ENCODE measurements at regions of chr3 and their contacts with region 1.

Region 1: DNA sequence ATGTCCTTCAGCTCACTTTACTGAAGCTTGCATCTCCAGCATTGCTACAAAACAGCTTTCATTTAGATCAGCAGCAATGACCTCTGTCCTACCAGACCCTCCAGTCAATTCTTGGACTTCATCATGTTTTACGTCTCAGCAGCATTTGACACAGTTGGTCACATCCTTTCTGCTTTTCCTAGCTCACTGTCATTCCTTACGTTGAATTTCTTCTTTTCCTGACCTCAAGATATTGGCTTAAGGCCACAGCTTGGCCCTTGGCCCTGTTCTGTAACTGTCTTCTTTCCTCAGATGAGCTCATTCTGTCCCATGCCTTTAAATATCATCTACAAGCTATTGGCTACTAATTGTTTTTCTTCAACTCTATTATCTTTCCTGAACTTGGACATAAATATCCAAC is 576.2 kb upstream of the KCNMB2 start:
- DNase-seq: no peak
- H3K4me3 ChIP-seq: no peak overlapping the region
- H3K4me3 Mint-ChIP-seq: no peak overlapping the region
- H3K27ac Mint-ChIP-seq: no peak overlapping the region
- H3K4me1 ChIP-seq: no peaks in the 10 kb centered on the region
- H3K4me1 Mint-ChIP-seq: peaks cover 7% of the 10 kb centered on the region
- H3K27me3 ChIP-seq: no peaks in the 10 kb centered on the region
- H3K27me3 Mint-ChIP-seq: no peaks in the 10 kb centered on the region
- CTCF ChIP-seq: no peak

Region 2: DNA sequence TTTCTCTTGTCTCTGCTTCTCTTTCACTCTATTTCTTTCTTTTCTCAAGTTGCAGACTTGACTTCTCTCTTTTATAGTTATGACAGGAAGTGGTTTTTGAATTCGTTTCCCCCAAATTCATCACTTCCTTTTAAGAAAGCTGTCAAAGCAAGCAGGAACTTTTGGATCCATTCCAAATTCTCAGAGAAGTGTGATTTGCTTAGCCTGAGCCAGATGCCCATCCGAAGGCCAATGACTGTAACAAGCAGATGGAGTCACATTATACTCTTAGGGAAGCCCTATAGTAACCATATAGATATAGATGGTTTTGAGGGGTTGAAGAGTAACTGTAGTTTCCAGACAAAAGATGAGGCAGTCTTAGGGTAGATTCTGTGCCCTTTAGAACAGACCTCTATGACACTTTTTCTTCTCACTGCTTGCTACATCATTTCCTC is 15.8 kb before region 1 on chr3:
- CTCF ChIA-PET with region 1: no interaction called
- POLR2A ChIA-PET with region 1: no interaction called
- intact Hi-C with region 1: no loop called
- DNase-seq: no peak
- H3K4me3 ChIP-seq: no peak overlapping the region
- H3K4me3 Mint-ChIP-seq: no peak overlapping the region
- H3K27ac Mint-ChIP-seq: no peak overlapping the region
- H3K4me1 ChIP-seq: no peaks in the 10 kb centered on the region
- H3K4me1 Mint-ChIP-seq: no peaks in the 10 kb centered on the region
- H3K27me3 ChIP-seq: no peaks in the 10 kb centered on the region
- H3K27me3 Mint-ChIP-seq: no peaks in the 10 kb centered on the region
- CTCF ChIP-seq: no peak

Region 3: DNA sequence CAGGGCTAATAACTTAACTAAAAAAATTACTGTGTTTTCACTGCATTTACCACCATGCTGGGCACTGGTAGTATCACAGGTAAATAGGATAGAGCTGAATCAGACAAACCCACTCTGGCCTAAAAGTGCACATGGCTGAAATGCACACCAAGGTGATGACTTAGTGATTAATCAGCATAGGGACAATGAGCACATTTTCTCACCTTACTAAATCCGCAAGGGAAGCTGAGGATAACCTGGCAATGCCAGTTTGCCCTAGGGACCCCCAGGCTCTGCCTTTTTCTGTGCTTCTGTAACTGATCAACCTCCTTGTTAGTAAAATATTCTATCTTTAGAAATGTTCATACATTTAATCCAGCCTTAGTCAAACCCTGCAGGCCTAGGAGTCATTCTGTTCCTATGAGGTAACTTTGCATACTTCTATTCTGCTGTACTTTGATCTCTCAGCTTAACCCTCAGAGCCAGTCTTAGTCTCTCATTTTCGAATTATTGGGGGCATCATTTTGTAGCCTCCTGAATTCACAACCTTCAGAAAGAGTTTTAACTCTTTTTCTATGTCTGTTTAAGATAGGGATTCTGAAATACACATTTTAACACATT is 13.3 kb after region 1 on chr3:
- CTCF ChIA-PET with region 1: interaction called, 10 read pairs
- POLR2A ChIA-PET with region 1: no interaction called
- intact Hi-C with region 1: no loop called
- DNase-seq: no peak
- H3K4me3 ChIP-seq: no peak overlapping the region
- H3K4me3 Mint-ChIP-seq: no peak overlapping the region
- H3K27ac Mint-ChIP-seq: no peak overlapping the region
- H3K4me1 ChIP-seq: peaks cover 12% of the 10 kb centered on the region
- H3K4me1 Mint-ChIP-seq: peaks cover 14% of the 10 kb centered on the region
- H3K27me3 ChIP-seq: no peaks in the 10 kb centered on the region
- H3K27me3 Mint-ChIP-seq: no peaks in the 10 kb centered on the region
- CTCF ChIP-seq: no peak

Measured in Caco-2 (cell line).